ENCODE measurements at regions of chr22 and their contacts with region 1.

Region 1: DNA sequence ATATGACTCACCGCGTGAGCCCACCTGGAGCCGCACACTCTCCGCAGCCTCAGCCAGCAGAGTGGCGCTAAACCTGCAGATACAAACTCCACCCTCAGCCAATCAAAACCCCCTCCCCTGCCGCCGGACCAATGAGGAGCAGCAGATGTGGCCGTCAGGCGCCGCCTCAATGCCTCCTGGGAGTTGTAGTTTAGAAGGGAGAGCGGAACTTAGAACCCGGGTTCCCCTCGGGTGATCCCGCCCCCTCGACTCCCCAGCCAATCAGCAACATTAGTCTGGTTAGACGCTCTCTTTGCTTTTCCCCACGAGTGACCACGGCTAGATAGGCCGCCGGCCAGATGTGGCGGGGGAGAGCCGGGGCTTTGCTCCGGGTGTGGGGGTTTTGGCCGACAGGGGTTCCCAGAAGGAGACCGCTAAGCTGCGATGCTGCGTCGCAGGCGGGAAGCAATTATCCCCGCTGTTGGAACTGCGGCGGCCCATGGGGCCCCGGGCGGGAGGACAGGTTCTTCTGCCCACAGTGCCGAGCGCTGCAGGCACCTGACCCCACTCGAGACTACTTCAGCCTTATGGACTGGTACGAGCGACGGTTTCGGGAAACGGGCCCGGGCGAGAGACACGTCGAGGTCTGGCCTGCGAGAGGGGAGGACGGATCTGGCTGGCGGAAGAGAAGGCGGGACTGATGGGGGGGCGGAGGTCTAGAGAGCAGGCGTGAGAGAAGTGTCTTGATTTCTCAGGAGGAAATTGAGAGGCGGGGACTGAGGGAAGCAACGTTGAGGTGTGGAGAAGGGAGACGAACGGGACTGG is at the starts of genes CHEK2 and HSCB:
- DNase-seq: peak; percentile 80 to 99 (median 96)
- ATAC-seq: peak; percentile 98
- H3K4me3 ChIP-seq: peak within 1 kb of the TSS; percentile 99
- H3K4me3 Mint-ChIP-seq: peak within 1 kb of the TSS; percentile 81 to 94 (median 87)
- H3K27ac ChIP-seq: peak within 1 kb of the TSS; percentile 90
- H3K27ac Mint-ChIP-seq: peak within 1 kb of the TSS; percentile 79 to 93 (median 89)
- H3K4me1 ChIP-seq: peaks cover 3 to 9% of the 10 kb centered on the region in 2 donors
- H3K4me1 Mint-ChIP-seq: peaks cover 14 to 49% (median 38%) of the 10 kb centered on the region in 7 donors
- H3K27me3 ChIP-seq: no peaks in the 10 kb centered on the region
- H3K27me3 Mint-ChIP-seq: no peaks in the 10 kb centered on the region
- total RNA-seq, gene CHEK2: 8.4 to 36.7 (median 10.6) TPM
- total RNA-seq, gene HSCB: 8.2 to 10.9 (median 9.0) TPM

Region 2: DNA sequence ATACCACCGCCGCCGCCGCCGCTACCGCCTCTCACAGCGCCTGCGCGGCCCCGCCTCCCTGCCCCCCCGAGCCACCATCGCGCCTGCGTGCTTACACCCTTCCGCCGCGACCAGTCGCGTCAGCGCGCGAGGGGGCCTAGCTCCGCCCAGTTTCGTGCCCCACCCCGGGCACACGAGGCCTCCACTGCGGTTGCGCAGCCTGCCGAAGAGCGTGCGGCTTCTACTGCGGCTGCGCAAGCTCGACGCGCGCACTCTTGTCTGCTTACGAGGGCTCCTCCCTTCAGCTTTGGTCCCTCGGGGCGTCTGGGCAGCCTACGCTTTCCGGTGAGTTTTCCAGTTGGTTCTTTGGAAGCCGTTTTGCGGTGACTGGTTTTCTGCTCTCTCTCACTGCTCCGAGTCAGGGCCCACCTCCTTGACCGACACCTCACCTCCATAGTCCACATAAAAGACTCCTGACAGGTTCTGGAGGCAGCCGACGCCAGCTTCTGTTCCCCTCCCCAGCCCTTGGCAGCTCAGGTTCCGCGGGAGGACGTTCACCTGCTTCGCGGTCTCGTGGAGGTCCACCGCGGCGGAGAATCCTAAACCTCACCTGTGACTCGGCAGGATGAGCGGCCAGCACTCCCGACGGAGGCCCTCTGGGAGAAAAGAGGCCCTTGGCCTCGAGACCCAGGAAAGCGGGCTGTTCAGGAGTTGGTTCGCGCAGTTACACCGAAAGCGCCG is 822.6 kb before region 1 on chr22 and contains the start of gene PITPNB:
- CTCF ChIA-PET with region 1: no interaction called
- POLR2A ChIA-PET with region 1: no interaction called
- intact Hi-C with region 1: loop called (anchors 1 to 5 kb)
- DNase-seq: peak; percentile 97 to 100 (median 99)
- ATAC-seq: peak; percentile 95
- H3K4me3 ChIP-seq: peak within 1 kb of the TSS; percentile 84
- H3K4me3 Mint-ChIP-seq: peak within 1 kb of the TSS; percentile 97 to 100 (median 99)
- H3K27ac ChIP-seq: peak within 1 kb of the TSS; percentile 94
- H3K27ac Mint-ChIP-seq: peak within 1 kb of the TSS; percentile 93 to 99 (median 99)
- H3K4me1 ChIP-seq: peaks cover 29 to 32% of the 10 kb centered on the region in 2 donors
- H3K4me1 Mint-ChIP-seq: peaks cover 56 to 85% (median 75%) of the 10 kb centered on the region in 7 donors
- H3K27me3 ChIP-seq: no peaks in the 10 kb centered on the region
- H3K27me3 Mint-ChIP-seq: peaks cover 0 to 4% (median 0%) of the 10 kb centered on the region in 5 donors
- total RNA-seq, gene PITPNB: 56.3 to 98.8 (median 62.8) TPM

Region 3: GRCh38 chr22:28600546-28601143 is 141.3 kb before region 1 on chr22:
- CTCF ChIA-PET with region 1: no interaction called
- POLR2A ChIA-PET with region 1: no interaction called
- intact Hi-C with region 1: loop called in 1 of 2 experiments (anchors 2 kb)
- DNase-seq: peak in 7 of 9 donors; percentile 30 to 66 (median 57)
- ATAC-seq: no peak
- H3K4me3 ChIP-seq: no peak overlapping the region
- H3K4me3 Mint-ChIP-seq: no peak overlapping the region
- H3K27ac ChIP-seq: no peak overlapping the region
- H3K27ac Mint-ChIP-seq: no peak overlapping the region
- H3K4me1 ChIP-seq: no peaks in the 10 kb centered on the region
- H3K4me1 Mint-ChIP-seq: no peaks in the 10 kb centered on the region
- H3K27me3 ChIP-seq: peaks cover 4 to 7% of the 10 kb centered on the region in 2 donors
- H3K27me3 Mint-ChIP-seq: peaks cover 10 to 64% (median 31%) of the 10 kb centered on the region in 5 donors

Region 4: DNA sequence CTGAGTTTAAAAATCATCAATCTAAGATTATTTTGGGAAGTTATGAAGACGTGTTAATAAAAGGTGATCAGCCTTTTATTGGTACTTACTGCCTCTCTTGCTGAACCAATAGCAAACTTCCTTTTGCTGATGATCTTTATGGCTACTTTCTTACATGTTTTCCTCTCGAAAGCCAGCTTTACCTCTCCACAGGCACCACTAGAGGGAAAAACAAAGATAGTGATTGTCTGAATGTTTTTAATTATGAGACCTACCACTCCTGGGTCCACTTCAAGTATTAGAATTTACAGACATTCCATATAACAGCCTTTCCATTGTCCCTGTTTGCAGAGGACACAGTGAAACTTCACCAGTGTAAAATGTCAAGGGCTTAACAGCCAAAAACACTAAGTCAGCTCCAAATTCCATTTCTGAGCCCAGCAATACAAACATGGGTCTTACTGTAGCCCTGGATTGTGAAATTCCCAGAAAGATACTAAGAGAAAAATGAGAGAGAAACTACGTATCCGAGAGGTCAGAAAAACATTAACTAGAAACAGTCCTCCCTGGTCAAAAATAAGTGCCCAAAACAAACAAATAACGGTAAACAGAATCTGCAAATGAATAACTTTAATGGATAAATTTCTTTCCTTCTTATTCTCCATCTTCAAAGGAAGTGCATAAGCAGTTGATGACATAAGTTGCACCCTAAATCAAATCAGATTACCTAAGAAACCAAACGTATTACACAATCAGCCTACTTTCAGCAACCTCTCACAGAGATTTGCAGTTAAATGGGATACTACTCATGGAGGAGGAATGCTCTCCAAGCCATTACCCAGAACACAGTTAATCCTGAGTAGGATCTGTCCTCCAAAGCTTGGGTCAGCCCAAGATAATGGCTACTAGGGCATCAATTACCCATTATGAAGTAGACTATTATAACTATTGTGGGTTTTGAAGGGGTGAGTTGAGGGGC is 29.9 kb before region 1 on chr22:
- CTCF ChIA-PET with region 1: no interaction called
- POLR2A ChIA-PET with region 1: no interaction called
- intact Hi-C with region 1: no loop called
- DNase-seq: no peak
- ATAC-seq: no peak
- H3K4me3 ChIP-seq: no peak overlapping the region
- H3K4me3 Mint-ChIP-seq: no peak overlapping the region
- H3K27ac ChIP-seq: no peak overlapping the region
- H3K27ac Mint-ChIP-seq: no peak overlapping the region
- H3K4me1 ChIP-seq: no peaks in the 10 kb centered on the region
- H3K4me1 Mint-ChIP-seq: peaks cover 0 to 19% (median 0%) of the 10 kb centered on the region in 7 donors
- H3K27me3 ChIP-seq: no peaks in the 10 kb centered on the region
- H3K27me3 Mint-ChIP-seq: no peaks in the 10 kb centered on the region

Region 5: GRCh38 chr22:28772633-28773460 is 30.9 kb after region 1 on chr22 and contains the start of gene CCDC117:
- CTCF ChIA-PET with region 1: interaction called, 3 read pairs
- POLR2A ChIA-PET with region 1: interaction called, 12 read pairs
- intact Hi-C with region 1: loop called (anchors 1 kb)
- DNase-seq: peak; percentile 76 to 93 (median 88)
- ATAC-seq: peak; percentile 97
- H3K4me3 ChIP-seq: peak within 1 kb of the TSS; percentile 83
- H3K4me3 Mint-ChIP-seq: peak within 1 kb of the TSS; percentile 84 to 100 (median 97)
- H3K27ac ChIP-seq: peak within 1 kb of the TSS; percentile 91
- H3K27ac Mint-ChIP-seq: peak within 1 kb of the TSS; percentile 86 to 98 (median 91)
- H3K4me1 ChIP-seq: peaks cover 13 to 17% of the 10 kb centered on the region in 2 donors
- H3K4me1 Mint-ChIP-seq: peaks cover 17 to 46% (median 31%) of the 10 kb centered on the region in 7 donors
- H3K27me3 ChIP-seq: no peaks in the 10 kb centered on the region
- H3K27me3 Mint-ChIP-seq: peaks cover 0 to 2% (median 0%) of the 10 kb centered on the region in 5 donors
- total RNA-seq, gene CCDC117: 13.5 to 33.5 (median 21.2) TPM

Region 6: DNA sequence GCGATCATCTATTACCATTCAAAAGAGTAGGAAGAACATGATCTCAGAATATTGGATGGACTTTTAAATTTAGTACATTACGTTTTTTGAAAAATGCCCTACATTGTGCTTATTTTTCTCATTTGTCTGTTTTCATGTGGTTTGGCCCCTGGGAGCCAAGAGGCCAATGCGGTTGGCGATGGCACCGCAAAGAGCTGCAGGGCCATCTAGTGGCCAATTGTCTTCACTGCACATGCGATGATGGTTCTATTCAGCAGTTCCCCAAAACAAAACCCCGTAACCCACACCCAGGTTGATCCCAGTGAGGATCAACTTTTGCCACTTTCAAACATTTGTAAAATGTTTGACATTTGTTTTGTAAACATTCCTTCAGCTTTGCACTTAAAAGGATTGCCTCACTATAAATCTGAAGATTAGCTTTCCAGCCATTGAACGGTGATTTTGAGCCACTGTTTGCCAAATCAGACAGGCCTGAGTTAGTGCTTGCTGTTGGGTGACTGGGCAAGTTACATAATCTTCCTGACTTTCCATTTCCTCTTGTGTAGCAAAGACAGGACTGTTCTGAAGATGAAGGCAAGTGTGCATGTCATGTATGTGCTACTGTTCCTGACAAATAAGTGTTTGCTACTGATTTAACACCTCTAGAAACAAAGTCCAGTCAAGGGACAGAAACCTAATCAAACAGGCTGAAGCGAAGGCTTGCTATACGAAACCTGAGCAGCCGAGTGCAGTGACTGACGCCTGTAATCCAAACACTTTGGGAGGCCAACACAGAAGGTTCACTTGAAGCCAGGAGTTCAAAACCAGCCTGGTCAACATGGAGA is 87.6 kb after region 1 on chr22:
- CTCF ChIA-PET with region 1: interaction called, 3 read pairs
- POLR2A ChIA-PET with region 1: no interaction called
- intact Hi-C with region 1: loop called in 1 of 2 experiments (anchors 1 kb)
- DNase-seq: peak; percentile 50 to 74 (median 69)
- ATAC-seq: peak; percentile 95
- H3K4me3 ChIP-seq: no peak overlapping the region
- H3K4me3 Mint-ChIP-seq: peak overlapping the region; percentile 39 to 75 (median 59)
- H3K27ac ChIP-seq: no peak overlapping the region
- H3K27ac Mint-ChIP-seq: peak overlapping the region in 6 of 9 donors; percentile 33 to 87 (median 66)
- H3K4me1 ChIP-seq: peaks cover 6 to 7% of the 10 kb centered on the region in 2 donors
- H3K4me1 Mint-ChIP-seq: peaks cover 8 to 44% (median 27%) of the 10 kb centered on the region in 7 donors
- H3K27me3 ChIP-seq: no peaks in the 10 kb centered on the region
- H3K27me3 Mint-ChIP-seq: no peaks in the 10 kb centered on the region

Region 7: DNA sequence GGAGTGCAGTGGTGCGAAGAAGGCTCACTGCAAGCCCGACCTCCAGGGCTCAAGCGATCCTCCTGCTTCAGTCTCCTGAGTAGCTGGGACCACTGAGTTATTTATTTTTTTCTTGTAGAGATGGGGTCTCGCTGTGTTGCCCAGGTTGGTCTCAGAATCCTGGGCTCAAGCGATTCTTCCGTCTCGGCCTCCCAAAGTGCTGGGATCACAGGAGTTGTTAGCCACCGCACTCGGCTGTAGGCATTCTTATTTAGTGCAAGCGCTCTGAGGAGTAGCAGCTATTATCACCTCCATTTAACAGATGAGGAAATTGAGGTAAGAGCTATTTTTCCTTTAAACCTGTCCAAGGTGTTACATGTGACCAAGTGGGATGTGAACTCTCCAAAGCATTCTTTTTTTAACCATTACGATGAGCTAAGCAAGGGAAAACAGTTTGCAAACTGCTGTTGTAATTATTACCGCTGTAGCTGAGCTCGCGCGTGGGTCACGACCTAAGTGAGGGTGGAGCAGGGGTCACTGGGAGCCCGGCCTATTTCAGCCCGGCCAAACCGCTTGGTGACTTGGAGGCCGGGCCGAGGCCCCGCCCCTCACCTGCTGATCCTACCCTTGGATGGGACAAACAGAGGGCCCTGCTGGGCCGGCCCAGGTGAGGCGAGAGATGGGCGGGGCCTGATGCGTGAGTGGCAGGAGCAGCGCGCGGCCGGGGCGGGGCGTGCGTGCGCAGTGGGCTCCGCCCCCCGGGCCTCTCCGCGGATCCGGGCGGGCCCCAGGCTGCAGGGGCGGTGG is 330.4 kb after region 1 on chr22:
- CTCF ChIA-PET with region 1: no interaction called
- POLR2A ChIA-PET with region 1: no interaction called
- intact Hi-C with region 1: loop called (anchors 1 to 2 kb)
- DNase-seq: peak; percentile 72 to 87 (median 84)
- ATAC-seq: peak; percentile 98
- H3K4me3 ChIP-seq: peak overlapping the region; percentile 46
- H3K4me3 Mint-ChIP-seq: peak overlapping the region; percentile 69 to 90 (median 82)
- H3K27ac ChIP-seq: no peak overlapping the region
- H3K27ac Mint-ChIP-seq: peak overlapping the region in 1 of 9 donors; percentile 44
- H3K4me1 ChIP-seq: peaks cover 19 to 21% of the 10 kb centered on the region in 2 donors
- H3K4me1 Mint-ChIP-seq: peaks cover 15 to 26% (median 23%) of the 10 kb centered on the region in 7 donors
- H3K27me3 ChIP-seq: peaks cover 17 to 26% of the 10 kb centered on the region in 2 donors
- H3K27me3 Mint-ChIP-seq: peaks cover 40 to 69% (median 44%) of the 10 kb centered on the region in 5 donors

Measured in naive thymus-derived CD4-positive, alpha-beta T cell (primary cell).